OCI-LY7 (cell line): ENCODE measurements at regions of chr11 and their contacts with region 1.

Region 1: DNA sequence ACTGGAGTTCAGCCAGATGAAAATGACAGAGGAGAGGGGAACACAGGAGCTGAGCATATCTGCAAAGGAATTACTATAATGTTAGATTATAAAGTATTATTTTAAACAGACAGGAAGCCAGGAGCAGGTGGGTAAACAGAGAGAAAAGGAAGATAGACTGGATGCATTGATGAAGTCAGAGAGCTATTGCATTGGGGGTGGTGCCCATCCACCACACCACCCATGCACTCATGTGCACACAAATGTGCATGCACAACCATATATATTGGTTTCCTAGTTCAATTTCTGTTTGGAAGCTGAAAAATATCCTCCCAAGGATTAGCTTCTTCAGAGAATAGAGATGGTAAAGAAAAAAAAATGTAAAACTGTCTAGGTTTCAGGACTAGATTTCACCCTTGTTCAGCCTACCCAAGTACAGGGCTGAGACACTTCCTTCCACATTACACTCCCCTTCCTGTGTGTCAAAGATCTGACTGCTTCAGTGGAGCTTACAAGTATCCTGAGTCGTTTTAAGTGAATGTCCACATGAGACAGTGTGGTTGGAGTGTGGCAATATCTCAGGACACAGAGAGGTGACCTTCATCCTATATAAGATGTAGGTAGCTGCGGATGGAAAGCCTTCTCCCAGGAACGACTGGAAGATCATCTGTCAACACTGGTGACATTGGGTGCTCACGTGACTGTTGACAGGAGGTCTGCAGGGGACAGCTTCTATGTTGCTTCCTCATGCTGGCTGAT is 12.2 kb upstream of the SMPD1 start:
- DNase-seq: peak; percentile 33
- H3K4me3 ChIP-seq: no peak overlapping the region
- H3K27ac ChIP-seq: no peak overlapping the region
- H3K4me1 ChIP-seq: peaks cover 16% of the 10 kb centered on the region
- CTCF ChIP-seq: no peak

Region 2: DNA sequence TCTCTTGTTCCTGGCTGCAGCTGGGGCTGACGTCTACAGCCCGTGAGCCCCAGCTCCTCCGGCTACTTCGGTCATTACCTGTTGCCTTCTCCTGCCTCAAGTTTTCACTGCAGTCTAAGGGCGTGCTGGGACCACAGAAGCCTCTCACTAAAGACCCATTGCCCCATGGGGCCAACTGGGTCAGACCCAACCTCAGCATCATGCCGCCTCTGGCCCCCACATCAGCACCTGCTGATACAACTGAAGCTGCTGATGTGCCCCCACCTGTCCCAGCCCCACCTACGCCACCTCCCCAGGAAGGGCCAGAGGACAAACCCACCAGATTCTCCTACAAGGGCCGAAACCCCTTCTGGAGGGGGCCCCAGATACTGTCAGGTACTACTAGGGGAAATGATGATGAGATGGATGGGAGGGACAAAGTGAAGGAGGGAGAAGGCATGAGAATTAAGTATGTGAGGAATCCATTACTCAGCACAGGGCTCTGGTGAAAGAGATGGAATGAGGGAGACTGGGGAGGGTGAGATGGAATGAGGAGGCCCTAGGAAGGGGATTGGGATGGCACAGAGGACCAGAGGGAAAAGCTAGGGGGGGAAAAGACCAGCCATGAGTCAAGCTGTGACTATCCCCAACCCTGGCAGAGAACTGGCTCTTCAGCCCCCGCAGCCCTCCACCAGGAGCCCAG is 167.7 kb before region 1 on chr11:
- CTCF ChIA-PET with region 1: no interaction called
- POLR2A ChIA-PET with region 1: no interaction called
- intact Hi-C with region 1: no loop called
- DNase-seq: no peak
- H3K4me3 ChIP-seq: no peak overlapping the region
- H3K27ac ChIP-seq: no peak overlapping the region
- H3K4me1 ChIP-seq: no peaks in the 10 kb centered on the region
- CTCF ChIP-seq: no peak

Region 3: GRCh38 chr11:6245536-6245935 is 132.5 kb before region 1 on chr11:
- CTCF ChIA-PET with region 1: no interaction called
- POLR2A ChIA-PET with region 1: no interaction called
- intact Hi-C with region 1: no loop called
- DNase-seq: no peak
- H3K4me3 ChIP-seq: no peak overlapping the region
- H3K27ac ChIP-seq: no peak overlapping the region
- H3K4me1 ChIP-seq: no peaks in the 10 kb centered on the region
- CTCF ChIP-seq: no peak

Region 4: DNA sequence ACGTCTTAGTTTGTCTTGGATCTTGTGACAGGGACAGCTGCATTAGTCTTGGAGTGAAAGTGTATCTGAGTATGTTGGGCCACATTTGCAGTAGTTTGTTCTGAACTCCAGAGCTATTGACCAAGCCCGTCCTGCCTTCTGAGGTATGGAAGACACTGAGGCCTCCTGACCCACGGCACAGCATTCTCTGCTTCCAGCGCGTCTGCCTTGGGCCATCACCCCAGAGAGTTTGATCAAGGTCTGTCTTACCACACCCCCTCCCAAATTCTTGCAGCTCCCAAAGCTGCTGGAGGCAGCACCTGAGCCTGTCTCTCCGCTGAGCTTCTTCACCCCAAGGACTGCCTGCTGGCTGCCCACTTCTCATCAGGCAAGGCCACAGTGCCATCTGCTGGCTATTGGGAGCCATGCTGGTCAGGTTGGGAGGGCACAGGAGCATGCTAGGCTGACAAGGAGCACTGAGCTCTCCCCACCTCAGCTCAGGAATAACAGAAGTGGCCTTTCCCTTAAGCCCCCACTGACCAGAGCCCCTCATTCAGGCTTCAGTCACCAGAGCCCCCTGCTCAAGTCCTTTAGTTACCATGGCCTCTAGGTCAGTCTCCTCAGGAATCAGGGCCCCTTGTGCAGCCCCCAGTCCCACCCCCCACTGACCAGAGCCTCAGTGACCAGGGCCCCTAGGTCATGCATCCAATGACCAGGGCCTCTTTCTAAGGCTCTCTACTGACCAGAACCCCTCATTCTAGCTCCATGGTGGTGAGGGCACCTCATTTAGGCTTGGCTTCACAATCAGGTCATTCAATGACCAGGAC is 15.0 kb before region 1 on chr11:
- CTCF ChIA-PET with region 1: interaction called, 14 read pairs
- POLR2A ChIA-PET with region 1: interaction called, 3 read pairs
- intact Hi-C with region 1: no loop called
- DNase-seq: peak; percentile 70
- H3K4me3 ChIP-seq: no peak overlapping the region
- H3K27ac ChIP-seq: no peak overlapping the region
- H3K4me1 ChIP-seq: no peaks in the 10 kb centered on the region
- CTCF ChIP-seq: peak; percentile 87

Region 5: GRCh38 chr11:6443269-6444003 is 65.4 kb after region 1 on chr11:
- CTCF ChIA-PET with region 1: interaction called, 74 read pairs
- POLR2A ChIA-PET with region 1: interaction called, 62 read pairs
- intact Hi-C with region 1: loop called (anchors 1 kb)
- DNase-seq: peak; percentile 77
- H3K4me3 ChIP-seq: no peak overlapping the region
- H3K27ac ChIP-seq: no peak overlapping the region
- H3K4me1 ChIP-seq: peaks cover 36% of the 10 kb centered on the region
- CTCF ChIP-seq: peak; percentile 94

Region 6: DNA sequence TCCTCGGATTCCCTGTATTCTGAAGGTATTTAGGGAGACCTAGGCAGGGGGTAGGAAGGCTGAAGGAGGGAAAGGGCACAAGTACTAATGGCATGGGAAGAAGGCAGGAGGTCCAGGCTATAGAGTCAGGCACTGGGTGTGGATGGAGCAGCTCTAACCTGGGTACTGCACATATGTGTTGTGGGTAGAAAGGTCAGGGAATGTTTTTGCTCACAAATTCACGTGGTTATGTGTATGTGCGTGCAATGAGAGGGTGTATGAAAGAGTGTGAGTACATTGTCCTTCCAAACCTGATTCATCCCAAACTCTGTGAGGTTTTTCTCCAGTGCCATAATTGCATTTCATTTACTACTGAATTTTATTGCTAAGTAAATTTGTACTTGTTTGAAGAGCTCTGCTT is 142.2 kb after region 1 on chr11:
- CTCF ChIA-PET with region 1: no interaction called
- POLR2A ChIA-PET with region 1: no interaction called
- intact Hi-C with region 1: no loop called
- DNase-seq: no peak
- H3K4me3 ChIP-seq: no peak overlapping the region
- H3K27ac ChIP-seq: no peak overlapping the region
- H3K4me1 ChIP-seq: no peaks in the 10 kb centered on the region
- CTCF ChIP-seq: no peak

Region 7: GRCh38 chr11:6603287-6604080 is 225.4 kb after region 1 on chr11 and contains the starts of genes ILK and RRP8:
- CTCF ChIA-PET with region 1: interaction called, 3 read pairs
- POLR2A ChIA-PET with region 1: no interaction called
- intact Hi-C with region 1: loop called (anchors 2 kb)
- DNase-seq: peak; percentile 90
- H3K4me3 ChIP-seq: peak within 1 kb of the TSS; percentile 91
- H3K27ac ChIP-seq: peak within 1 kb of the TSS; percentile 67
- H3K4me1 ChIP-seq: peaks cover 47% of the 10 kb centered on the region
- CTCF ChIP-seq: 0 out of 2 replicates have a peak, but pooled peaks have one; percentile 18
- total RNA-seq, gene ILK: 52.0 and 64.8 TPM in 2 replicates
- total RNA-seq, gene RRP8: 26.4 and 29.4 TPM in 2 replicates

Region 8: DNA sequence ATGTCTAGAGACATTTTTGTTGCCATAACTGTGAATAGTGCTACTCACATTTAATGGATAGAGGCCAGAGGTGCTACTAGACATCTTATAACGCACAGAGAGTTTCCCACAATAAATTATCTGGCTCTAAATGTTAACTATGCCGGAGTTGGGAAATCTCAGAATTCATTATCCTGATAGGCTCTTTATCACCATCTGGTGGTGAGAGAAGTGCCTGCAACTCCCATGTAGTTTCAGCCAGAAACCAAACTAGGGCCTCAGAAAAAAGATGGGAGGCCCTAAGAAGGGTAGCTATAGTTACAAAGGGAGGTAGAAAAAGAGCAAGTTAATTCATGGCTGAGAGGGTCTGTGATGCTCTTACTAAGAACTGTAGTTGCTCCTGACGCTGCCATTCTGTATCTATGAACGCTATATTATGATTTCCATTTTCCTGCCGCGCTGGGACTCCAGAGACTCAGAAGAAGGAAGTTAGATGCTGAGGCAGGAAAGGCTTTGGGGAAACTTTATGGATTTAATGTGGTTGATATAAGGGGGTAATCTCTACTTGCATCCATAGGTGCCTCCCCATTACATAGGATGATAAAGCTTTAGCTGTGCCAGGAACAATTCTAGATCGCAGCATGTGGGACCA is 327.9 kb after region 1 on chr11:
- CTCF ChIA-PET with region 1: no interaction called
- POLR2A ChIA-PET with region 1: no interaction called
- intact Hi-C with region 1: loop called (anchors 2 kb)
- DNase-seq: peak; percentile 58
- H3K4me3 ChIP-seq: no peak overlapping the region
- H3K27ac ChIP-seq: no peak overlapping the region
- H3K4me1 ChIP-seq: no peaks in the 10 kb centered on the region
- CTCF ChIP-seq: peak; percentile 98